Sigmoid colon (tissue), 7 donors: ENCODE measurements at regions of chr13 and their contacts with region 1.

Region 1: DNA sequence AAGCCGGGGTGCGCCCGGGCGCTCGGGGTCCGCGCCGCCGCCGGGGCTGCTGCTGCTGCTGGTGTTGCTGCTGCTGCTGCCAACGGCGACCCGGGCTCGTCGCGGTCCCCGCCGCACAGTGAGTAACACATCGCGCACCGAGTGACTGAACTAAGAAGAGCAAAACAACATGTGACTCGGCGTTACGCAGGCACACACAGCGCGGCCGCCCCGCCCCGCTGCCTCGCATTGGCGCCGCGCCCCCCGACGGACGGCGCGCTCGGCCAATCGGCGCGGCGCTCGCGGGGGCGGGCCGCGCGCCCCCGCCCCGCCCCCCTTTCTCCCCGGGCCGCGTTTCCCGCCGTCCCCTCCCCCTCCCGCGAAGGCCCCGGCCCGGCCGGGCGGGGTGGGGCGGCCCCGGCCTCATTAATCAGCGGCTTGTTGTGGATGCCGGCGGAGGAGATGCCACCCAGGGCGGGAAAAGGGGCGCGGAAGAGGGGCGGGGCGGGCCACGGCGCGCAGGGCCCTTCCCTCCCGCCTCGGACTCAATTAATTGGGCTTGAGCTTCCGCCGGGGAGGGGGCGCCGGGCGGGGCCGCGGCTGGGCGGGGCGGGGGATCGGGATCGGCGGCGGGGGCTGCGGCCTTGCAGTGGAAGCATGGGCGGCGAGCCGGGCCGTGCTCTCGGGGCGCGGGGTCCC is at the start of gene IRS2:
- DNase-seq: peak; percentile 98
- H3K4me3 ChIP-seq: peak within 1 kb of the TSS; percentile 81 to 95 (median 90)
- H3K27ac ChIP-seq: peak within 1 kb of the TSS; percentile 95 to 98 (median 96)
- H3K4me1 ChIP-seq: peaks cover 0 to 60% (median 39%) of the 10 kb centered on the region in 4 donors
- H3K27me3 ChIP-seq: no peaks in the 10 kb centered on the region
- CTCF ChIP-seq: no peak
- EP300 ChIP-seq: peak in 1 of 4 donors; percentile 3
- POLR2A ChIP-seq: peak; percentile 50 to 64
- total RNA-seq, gene IRS2: 15.3 to 21.9 (median 20.3) TPM

Region 2: DNA sequence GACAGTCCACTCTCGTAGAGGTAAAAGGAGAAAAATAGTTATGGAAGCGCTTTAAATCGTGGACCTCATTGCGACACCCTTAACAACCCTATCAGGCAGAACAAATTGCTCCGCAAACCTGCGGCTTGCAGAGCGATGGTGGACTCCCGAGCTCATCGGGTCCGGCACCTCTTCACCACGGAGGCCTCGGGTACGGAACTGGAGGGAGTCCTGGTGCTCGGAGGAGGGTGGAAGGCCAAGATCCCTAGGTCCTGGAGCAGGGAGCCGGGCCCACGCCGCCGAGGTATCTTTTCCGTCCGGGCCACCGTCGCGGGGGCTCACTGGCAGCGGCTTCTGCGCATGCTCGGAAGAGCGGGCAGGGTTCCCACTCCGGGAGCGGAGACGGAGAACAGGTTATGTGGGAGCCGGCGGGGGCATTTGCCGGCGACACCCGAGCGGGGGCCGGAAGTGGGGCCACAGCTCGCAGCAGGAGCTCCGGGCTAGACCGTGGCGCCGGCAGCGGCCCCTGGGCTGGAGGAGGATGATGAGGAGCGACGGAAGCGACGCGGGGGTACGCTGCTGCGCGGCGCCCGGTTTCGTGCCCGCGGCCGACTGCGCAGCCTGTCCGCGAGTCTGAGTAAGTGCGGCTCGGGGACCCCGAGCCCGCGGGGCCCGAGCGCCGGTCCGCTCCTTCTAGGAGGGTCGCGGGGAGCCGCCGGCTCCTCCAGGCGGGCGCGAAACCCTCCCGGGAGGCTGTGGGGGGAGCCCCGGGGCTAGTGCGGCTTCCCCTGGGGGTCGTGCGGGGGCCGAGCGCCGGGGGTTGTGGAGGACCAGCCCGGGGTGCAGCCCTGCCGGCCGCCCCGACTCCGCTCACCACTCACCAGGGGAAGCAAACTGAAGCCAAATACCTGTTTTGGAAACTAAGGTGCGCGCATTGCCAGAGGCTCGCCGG is 1568.3 kb before region 1 on chr13 and contains the start of gene ABHD13:
- intact Hi-C with region 1: loop called (anchors 5 kb)
- DNase-seq: peak; percentile 94
- H3K4me3 ChIP-seq: peak within 1 kb of the TSS; percentile 86 to 100 (median 92)
- H3K27ac ChIP-seq: peak within 1 kb of the TSS; percentile 87 to 94 (median 90)
- H3K4me1 ChIP-seq: peaks cover 0 to 70% (median 50%) of the 10 kb centered on the region in 4 donors
- H3K27me3 ChIP-seq: no peaks in the 10 kb centered on the region
- CTCF ChIP-seq: no peak
- EP300 ChIP-seq: peak in 2 of 4 donors; percentile 43 to 50
- POLR2A ChIP-seq: peak; percentile 44 to 64
- total RNA-seq, gene ABHD13: 13.0 to 15.7 (median 14.2) TPM

Region 3: DNA sequence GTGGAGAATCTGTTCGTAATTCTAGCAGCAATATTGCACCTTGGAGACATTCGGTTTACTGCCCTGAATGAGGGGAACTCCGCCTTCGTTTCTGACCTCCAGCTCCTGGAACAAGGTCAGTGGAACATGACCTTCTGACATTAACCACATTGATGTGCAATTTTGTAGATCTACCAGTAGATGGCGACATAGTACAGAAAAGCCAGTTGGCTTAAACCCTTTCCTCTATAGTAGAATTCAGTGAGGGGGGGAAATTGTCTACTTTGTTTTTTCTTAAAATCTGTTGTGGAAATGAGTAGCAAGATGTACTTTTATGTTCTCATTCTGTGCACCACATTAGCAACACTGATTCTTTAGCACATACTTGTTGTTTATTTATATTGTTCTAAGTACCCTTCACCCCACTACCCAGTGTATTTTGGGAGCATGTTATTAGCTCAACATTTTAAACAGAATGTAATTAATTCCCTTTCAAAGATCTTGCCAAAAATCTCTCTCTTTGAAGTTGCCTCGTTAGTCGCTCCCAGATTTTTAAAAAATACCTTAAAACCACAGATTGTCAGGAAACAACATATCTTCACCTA is 825.0 kb before region 1 on chr13:
- intact Hi-C with region 1: loop called (anchors 5 kb)
- DNase-seq: no peak
- H3K4me3 ChIP-seq: no peak overlapping the region
- H3K27ac ChIP-seq: no peak overlapping the region
- H3K4me1 ChIP-seq: peaks cover 0 to 6% (median 2%) of the 10 kb centered on the region in 4 donors
- H3K27me3 ChIP-seq: no peaks in the 10 kb centered on the region
- CTCF ChIP-seq: peak; percentile 66 to 83 (median 74)
- EP300 ChIP-seq: no peak
- POLR2A ChIP-seq: no peak

Region 4: GRCh38 chr13:109454167-109454917 is 332.3 kb before region 1 on chr13:
- intact Hi-C with region 1: no loop called
- DNase-seq: no peak
- H3K4me3 ChIP-seq: no peak overlapping the region
- H3K27ac ChIP-seq: peak overlapping the region in 3 of 4 donors; percentile 34 to 80 (median 70)
- H3K4me1 ChIP-seq: peaks cover 0 to 22% (median 12%) of the 10 kb centered on the region in 4 donors
- H3K27me3 ChIP-seq: no peaks in the 10 kb centered on the region
- CTCF ChIP-seq: no peak
- EP300 ChIP-seq: no peak
- POLR2A ChIP-seq: no peak

Region 5: GRCh38 chr13:109869312-109870237 is 83.0 kb after region 1 on chr13:
- intact Hi-C with region 1: loop called (anchors 2 kb)
- DNase-seq: peak; percentile 93
- H3K4me3 ChIP-seq: peak overlapping the region; percentile 24 to 45 (median 40)
- H3K27ac ChIP-seq: peak overlapping the region; percentile 67 to 73 (median 72)
- H3K4me1 ChIP-seq: peaks cover 0 to 32% (median 21%) of the 10 kb centered on the region in 4 donors
- H3K27me3 ChIP-seq: no peaks in the 10 kb centered on the region
- CTCF ChIP-seq: peak in 2 of 4 experiments; percentile 24 to 40
- EP300 ChIP-seq: peak in 1 of 4 donors; percentile 28
- POLR2A ChIP-seq: no peak

Region 6: DNA sequence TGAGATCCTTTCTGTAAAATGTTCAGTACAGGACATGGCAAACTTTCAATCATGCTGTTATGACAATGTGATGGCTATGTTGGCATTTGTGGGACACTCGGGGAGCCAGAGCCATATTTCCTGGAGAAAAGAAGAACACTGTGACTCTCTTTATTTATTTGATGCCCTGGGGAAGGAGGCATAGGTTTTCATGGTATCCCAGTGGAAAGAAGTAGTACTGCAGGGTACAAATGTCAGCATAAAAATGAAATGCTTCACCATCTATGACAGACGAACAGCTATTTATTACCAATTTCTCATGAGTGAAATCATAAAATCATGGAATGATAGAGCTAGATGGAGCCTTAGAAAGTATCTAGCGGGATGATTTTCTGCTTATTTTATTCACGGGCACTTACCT is 303.2 kb after region 1 on chr13:
- intact Hi-C with region 1: loop called (anchors 1 kb)
- DNase-seq: no peak
- H3K4me3 ChIP-seq: no peak overlapping the region
- H3K27ac ChIP-seq: no peak overlapping the region
- H3K4me1 ChIP-seq: peaks cover 0 to 22% (median 14%) of the 10 kb centered on the region in 4 donors
- H3K27me3 ChIP-seq: no peaks in the 10 kb centered on the region
- CTCF ChIP-seq: peak in 1 of 4 experiments; percentile 10
- EP300 ChIP-seq: no peak
- POLR2A ChIP-seq: no peak

Region 7: DNA sequence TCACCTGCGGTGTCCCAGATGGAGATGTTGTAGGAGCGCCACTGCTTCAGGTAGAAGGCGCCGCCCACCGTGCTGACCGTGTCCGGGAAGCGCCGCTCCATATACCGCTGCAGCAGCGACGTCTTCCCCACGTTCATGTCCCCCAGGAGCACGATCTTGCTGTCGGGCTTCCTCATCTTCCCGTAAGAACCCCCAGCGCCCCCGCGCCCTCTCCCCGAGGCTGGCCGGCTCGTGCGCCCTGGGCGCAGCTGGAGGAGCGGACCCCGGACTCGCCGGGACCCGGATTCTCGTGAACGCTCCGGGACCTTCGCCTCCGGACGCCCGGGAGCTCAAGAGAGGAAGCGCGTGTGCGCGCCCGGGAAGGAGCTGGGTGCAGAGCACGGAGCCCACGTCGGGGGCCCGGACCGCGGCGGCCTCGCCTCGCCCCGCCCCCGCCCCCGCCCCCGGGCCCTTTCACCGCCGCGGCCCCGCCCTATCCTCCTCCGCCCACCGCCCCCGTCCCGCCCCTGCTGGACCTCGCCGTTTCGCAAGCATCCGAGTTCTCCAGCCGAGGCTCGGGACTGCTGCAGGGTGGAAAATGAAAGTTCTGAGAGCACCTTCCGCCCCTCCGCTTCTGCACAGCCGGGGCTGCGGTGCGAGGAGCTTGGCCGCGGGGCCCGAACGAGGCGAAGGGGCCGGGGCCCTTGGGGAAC is 774.9 kb after region 1 on chr13 and contains the start of gene RAB20:
- intact Hi-C with region 1: loop called (anchors 5 kb)
- DNase-seq: peak; percentile 95
- H3K4me3 ChIP-seq: peak within 1 kb of the TSS; percentile 57 to 89 (median 76)
- H3K27ac ChIP-seq: peak within 1 kb of the TSS; percentile 92 to 93 (median 92)
- H3K4me1 ChIP-seq: peaks cover 0 to 44% (median 25%) of the 10 kb centered on the region in 4 donors
- H3K27me3 ChIP-seq: no peaks in the 10 kb centered on the region
- CTCF ChIP-seq: no peak
- EP300 ChIP-seq: no peak
- POLR2A ChIP-seq: peak; percentile 42 to 43
- total RNA-seq, gene RAB20: 6.9 to 21.3 (median 15.1) TPM